ENCODE measurements at regions of chr4 and their contacts with region 1.

Region 1: DNA sequence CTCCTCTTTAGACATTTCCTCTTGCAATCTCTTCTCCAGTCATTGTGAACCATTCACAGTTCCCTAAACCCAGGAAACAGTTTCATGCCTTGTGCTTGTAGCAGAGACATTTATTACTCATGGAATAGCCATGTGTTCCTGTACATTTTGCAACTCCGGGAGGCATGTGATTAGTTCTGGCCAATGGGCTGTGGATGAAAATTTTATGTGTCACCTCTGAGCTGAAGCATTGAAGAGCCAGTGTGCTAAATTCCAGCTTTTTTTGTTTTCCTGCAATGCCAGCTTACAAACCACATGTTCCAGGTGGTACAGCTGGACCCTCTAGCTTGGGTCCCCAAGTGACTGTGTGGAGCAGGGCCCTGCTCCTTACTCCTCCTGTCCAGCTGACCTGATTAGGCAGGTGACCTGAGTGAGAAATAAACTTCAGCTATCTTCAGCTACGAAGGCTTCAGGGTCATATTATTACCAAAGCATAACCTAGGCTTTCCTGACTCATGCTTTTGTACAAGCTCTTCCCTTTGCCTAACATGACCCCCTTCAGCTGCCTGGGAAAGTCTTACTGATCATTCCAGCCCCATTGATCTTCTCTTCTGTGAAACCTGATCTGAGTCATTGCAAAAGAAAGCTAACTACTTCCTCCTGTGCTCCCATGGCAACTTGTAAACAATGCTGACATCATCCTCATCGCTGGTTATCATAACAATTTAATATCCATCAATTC is 200.4 kb downstream of the PTTG2 start:
- DNase-seq: peak; percentile 72
- ATAC-seq: peak; percentile 78
- H3K4me3 ChIP-seq: no peak overlapping the region
- H3K4me3 Mint-ChIP-seq: no peak overlapping the region
- H3K27ac ChIP-seq: peak overlapping the region in 1 of 2 donors; percentile 33
- H3K27ac Mint-ChIP-seq: peak overlapping the region; percentile 24
- H3K4me1 ChIP-seq: peaks cover under 1 to 13% of the 10 kb centered on the region in 2 donors
- H3K4me1 Mint-ChIP-seq: peaks cover 7% of the 10 kb centered on the region
- H3K27me3 ChIP-seq: no peaks in the 10 kb centered on the region
- H3K27me3 Mint-ChIP-seq: no peaks in the 10 kb centered on the region
- CTCF ChIP-seq: no peak

Region 2: DNA sequence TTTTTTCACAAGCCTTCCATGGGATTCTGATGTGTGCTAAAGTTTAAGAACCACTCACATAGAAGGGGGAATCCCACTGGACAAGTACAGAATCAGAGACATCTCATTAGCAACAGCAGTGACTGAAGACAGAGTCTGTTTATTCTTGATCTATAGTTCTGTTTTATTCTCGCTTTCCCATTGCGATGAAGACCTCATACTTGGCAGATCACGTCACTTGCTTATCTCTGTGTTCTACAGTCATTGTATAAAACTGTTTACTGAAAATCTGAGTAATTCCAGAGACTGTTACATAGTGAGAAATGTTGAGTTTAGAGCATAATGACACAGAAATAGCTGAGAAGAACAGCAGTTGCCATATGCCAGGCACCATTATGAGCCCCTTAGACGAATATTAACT is 14.9 kb before region 1 on chr4:
- CTCF ChIA-PET with region 1: no interaction called
- POLR2A ChIA-PET with region 1: no interaction called
- intact Hi-C with region 1: no loop called
- DNase-seq: no peak
- ATAC-seq: no peak
- H3K4me3 ChIP-seq: no peak overlapping the region
- H3K4me3 Mint-ChIP-seq: no peak overlapping the region
- H3K27ac ChIP-seq: no peak overlapping the region
- H3K27ac Mint-ChIP-seq: no peak overlapping the region
- H3K4me1 ChIP-seq: no peaks in the 10 kb centered on the region
- H3K4me1 Mint-ChIP-seq: no peaks in the 10 kb centered on the region
- H3K27me3 ChIP-seq: no peaks in the 10 kb centered on the region
- H3K27me3 Mint-ChIP-seq: no peaks in the 10 kb centered on the region
- CTCF ChIP-seq: no peak

Region 3: DNA sequence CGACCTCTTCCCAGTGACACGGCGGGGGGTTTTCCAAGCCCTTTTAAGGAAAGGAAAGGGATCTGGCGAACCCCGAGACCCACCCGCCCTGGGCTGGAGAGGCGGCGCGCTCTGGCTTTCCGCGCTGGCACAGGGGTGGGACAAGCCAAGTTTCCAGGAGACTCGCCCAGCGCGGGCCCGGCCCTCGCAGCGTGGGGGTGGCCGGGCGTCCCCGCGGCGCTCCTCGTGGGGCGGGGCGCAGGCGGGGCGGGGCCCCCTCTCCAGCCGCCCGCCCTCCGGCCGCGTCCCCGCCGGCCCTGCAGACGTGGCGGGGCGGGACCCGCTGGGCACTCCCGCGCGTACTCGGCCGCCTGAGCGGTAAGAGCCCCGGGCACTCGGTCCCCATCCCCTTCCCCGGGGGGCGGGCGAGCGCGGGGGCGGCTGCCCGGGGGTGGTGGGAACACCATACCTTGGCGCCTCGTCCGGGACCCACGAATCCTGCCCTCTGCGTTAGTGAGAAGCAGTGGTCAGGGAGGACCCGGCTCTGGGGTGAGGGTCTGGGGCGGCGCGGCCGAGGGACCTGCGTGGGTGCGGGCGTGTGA is 706.9 kb after region 1 on chr4 and contains the start of gene FAM114A1:
- CTCF ChIA-PET with region 1: no interaction called
- POLR2A ChIA-PET with region 1: interaction called, 11 read pairs
- intact Hi-C with region 1: no loop called
- DNase-seq: peak; percentile 54
- ATAC-seq: peak; percentile 99
- H3K4me3 ChIP-seq: peak within 1 kb of the TSS; percentile 50 to 63 (median 60)
- H3K4me3 Mint-ChIP-seq: peak within 1 kb of the TSS; percentile 89
- H3K27ac ChIP-seq: peak within 1 kb of the TSS in 1 of 2 donors; percentile 54
- H3K27ac Mint-ChIP-seq: peak within 1 kb of the TSS; percentile 60
- H3K4me1 ChIP-seq: peaks cover 10 to 12% of the 10 kb centered on the region in 2 donors
- H3K4me1 Mint-ChIP-seq: peaks cover 11% of the 10 kb centered on the region
- H3K27me3 ChIP-seq: no peaks in the 10 kb centered on the region
- H3K27me3 Mint-ChIP-seq: no peaks in the 10 kb centered on the region
- CTCF ChIP-seq: no peak
- total RNA-seq, gene FAM114A1: 2.2 and 2.9 TPM in 2 replicates